Activated T-helper 1 cell treated with anti-CD3 and anti-CD28 coated beads, Interleukin-12 subunit alpha, Interleukin-12 subunit beta, Interleukin-2, Interleukin-4 antibody, amounts not matched to agents 30 ng/mL and 10 ng/mL and 1 ng/mL, durations not matched to agents 14 hours and 24 hours and 36 hours (primary cell): ENCODE measurements at regions of chr19 and their contacts with region 1.

Region 1: DNA sequence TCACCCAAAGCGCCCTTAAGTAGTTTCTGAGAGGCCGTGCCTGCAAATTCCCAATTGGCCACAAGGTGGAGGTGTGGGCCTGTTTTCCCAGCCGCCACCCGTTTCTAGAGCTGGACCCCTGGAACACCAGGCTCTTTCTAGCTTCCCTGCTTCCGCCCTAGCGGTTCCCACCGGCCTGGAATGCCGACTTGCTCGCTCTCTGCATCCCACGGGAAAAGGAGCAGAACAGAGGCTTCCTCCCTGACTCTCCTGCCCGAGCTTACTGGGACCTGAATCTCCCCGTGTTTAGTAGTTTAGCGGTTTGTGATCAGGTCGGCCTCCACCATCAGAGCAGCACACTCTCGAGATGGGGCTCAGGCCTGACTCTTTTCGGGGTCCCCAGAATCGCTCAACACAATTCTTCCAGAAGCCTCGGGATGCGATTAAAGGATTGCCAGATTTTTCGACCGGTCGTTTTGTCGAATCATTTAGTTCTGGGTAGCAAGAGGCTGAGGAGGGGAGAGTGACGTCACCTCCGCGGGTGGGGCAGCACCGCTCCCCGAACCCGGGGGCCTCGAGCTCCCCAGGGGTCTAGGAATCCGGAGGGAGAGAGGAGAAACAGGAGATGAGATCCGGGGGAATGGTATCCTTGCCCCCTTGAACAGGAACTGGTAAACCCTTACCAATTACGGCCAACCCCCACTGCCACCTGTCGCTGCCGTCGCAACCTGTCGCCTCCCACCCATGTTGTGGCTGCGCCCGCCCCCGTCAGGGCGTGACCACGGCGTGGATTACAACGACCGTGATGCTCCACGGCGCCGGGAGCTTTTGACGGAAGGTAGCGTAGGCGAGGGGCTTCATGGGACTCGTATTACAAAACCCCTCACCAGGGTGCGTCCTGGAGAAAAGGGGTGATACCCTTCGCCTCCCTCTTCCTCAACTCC is 8.0 kb downstream of the NAPSA start:
- DNase-seq: peak; percentile 86
- H3K4me3 Mint-ChIP-seq: peak overlapping the region; percentile 90
- H3K27ac Mint-ChIP-seq: peak overlapping the region; percentile 99
- H3K4me1 Mint-ChIP-seq: peaks cover 52% of the 10 kb centered on the region
- H3K27me3 Mint-ChIP-seq: no peaks in the 10 kb centered on the region

Region 2: DNA sequence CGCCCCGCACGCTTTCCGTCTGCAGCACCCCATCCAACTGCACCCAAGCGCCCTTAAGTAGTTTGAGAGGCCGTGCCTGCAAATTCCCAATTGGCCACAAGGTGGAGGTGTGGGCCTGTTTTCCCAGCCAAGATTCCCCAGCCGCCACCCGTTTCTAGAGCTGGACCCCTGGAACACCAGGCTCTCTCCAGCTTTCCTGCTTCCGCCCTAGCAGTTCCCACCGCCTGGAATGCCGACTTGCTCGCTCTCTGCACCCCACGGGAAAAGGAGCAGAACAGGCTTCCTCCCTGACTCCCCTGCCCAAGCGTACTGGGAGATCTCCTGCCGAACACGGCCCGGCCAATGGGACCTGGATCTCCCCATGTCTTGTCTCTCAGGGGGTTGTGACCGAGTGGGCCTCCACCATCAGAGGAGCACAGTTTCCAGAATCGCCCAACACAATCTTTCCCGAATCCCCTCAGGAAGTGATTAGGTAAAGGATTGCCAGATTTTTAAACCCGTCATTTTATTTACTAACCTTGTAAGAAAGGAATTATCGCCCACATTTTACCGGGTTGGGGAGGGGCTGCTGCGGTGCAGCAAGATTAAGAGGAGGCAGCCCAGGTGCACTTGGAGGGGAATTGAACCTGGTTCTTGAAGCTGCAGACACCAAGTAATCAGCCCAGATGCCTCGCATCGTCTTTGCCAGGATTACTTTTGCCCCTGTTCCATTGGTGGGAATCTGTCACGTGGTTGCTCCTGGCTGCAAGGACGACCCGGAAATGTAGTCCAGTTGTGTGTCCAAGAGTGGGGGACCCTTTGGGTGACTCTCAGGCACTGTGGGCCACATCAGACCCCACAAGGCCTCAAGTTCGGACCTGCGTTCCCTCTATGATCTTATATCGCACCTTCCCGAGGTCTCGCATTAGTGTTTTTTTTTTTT is 11.5 kb after region 1 on chr19:
- intact Hi-C with region 1: loop called (anchors 1 kb)
- DNase-seq: peak; percentile 73
- H3K4me3 Mint-ChIP-seq: peak overlapping the region; percentile 94
- H3K27ac Mint-ChIP-seq: peak overlapping the region; percentile 89
- H3K4me1 Mint-ChIP-seq: peaks cover 37% of the 10 kb centered on the region
- H3K27me3 Mint-ChIP-seq: no peaks in the 10 kb centered on the region

Region 3: DNA sequence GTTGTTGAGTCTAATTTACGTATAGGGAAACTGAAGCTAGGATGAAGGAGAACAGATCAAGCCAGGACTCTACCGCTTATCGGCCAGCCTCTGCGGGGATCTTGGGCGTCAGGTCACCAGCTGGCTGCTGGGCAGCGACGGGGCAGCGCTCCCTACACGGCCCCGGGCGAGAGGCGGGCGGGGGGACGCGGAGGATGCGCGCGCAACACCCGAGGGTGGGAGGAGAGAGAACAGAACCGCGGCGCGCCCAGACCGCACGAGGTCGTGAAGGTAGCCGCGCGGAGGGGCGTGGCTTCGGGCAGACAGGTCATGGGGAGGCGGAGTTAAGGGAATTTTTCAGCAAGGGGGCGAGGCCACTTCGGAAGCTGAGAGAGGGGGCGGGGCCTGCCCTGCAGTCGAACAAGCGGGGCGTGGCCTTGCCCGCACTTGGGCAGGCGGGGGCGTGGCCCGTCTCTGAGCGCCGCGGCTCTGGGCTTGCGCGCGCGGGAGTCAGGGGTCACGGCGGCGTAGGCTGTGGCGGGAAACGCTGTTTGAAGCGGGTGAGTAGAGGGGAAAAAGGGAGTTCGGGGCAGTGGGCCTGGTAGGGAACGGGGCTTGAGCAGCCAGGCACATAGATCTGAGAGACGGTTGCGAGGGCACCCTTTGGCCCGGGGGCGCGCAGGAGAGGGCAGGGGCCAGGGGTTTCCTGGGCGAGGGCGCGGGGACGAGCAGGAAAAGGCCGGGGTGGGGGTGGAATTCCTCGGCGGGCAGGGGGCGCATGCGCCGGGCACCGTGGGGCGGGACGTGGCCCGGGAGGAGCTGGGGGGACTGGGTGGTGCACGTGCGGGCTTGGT is 26.6 kb after region 1 on chr19 and contains the start of gene POLD1:
- intact Hi-C with region 1: loop called (anchors 1 kb)
- DNase-seq: peak; percentile 99
- H3K4me3 Mint-ChIP-seq: peak within 1 kb of the TSS; percentile 91
- H3K27ac Mint-ChIP-seq: peak within 1 kb of the TSS; percentile 96
- H3K4me1 Mint-ChIP-seq: peaks cover 28% of the 10 kb centered on the region
- H3K27me3 Mint-ChIP-seq: no peaks in the 10 kb centered on the region
- total RNA-seq, gene POLD1: 171 and 178 TPM in 2 replicates

Region 4: DNA sequence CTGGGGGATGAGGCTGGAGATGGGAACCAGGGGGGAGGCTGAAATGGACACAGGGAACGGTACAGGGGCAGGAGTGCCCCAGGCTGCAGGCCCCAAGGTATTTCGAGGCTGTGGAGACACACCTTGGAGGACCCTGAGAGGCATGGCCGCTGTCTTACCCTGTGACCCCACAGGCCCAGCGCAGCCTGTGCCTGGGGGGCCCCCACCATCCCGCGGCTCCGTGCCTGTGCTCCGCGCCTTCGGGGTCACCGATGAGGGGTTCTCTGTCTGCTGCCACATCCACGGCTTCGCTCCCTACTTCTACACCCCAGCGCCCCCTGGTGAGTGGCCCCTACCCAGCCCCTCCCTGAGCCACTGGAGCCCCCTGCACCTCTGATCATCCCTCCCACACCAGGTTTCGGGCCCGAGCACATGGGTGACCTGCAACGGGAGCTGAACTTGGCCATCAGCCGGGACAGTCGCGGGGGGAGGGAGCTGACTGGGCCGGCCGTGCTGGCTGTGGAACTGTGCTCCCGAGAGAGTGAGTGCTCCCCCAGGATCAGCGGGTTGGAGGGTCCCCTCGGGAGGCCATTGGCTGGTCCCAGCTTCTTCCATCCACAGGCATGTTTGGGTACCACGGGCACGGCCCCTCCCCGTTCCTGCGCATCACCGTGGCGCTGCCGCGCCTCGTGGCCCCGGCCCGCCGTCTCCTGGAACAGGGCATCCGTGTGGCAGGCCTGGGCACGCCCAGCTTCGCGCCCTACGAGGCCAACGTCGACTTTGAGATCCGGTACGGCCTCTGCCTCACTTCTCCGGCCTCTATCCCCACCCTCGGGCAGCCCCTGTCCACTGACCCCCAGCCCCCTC is 44.4 kb after region 1 on chr19:
- intact Hi-C with region 1: no loop called
- DNase-seq: no peak
- H3K4me3 Mint-ChIP-seq: no peak overlapping the region
- H3K27ac Mint-ChIP-seq: no peak overlapping the region
- H3K4me1 Mint-ChIP-seq: no peaks in the 10 kb centered on the region
- H3K27me3 Mint-ChIP-seq: no peaks in the 10 kb centered on the region

Region 5: DNA sequence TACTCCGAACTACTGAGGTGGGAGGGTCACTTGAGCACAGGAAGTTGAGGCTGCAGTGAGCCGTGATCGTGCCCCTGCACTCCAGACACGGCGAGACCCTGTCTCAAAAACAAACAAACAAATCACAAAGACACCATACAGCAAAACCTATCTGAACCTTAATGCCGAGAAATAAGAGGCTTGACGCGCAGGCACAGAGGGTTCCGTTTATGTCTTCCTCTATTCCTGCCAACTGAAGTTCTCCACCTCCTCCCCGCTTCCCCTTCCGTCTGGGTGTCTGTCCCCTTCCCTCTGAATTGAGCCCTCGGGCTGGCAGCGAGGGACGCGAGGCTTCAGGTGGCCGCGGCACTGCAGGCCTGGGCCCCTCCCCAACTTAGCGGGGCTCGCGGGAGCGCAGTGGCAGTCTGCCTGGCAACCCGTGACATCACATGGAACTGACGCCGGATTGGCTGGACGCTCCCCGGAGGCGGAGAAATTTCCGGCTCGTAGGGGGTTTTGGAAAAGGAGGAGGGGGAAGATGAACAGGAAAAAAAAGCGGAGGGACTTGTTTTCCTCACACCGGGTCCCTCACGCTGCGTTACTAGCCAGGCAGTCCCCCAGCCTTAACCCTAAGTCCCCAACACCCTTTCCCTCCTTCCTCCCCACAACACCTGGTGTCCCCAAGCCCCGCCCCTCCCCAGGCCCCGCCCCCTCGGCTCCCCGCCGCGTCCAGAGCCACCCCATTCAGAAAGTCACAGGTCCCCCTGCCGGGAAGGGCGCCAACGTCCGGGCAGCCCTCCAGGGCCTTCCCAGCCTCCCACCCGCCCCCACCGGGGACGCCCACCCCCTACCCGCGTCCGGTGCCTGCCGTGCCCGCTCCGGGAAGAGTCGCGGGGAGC is 74.1 kb after region 1 on chr19:
- intact Hi-C with region 1: loop called (anchors 1 kb)
- DNase-seq: peak; percentile 88
- H3K4me3 Mint-ChIP-seq: peak overlapping the region; percentile 89
- H3K27ac Mint-ChIP-seq: peak overlapping the region; percentile 93
- H3K4me1 Mint-ChIP-seq: peaks cover 12% of the 10 kb centered on the region
- H3K27me3 Mint-ChIP-seq: peaks cover 13% of the 10 kb centered on the region

Region 6: DNA sequence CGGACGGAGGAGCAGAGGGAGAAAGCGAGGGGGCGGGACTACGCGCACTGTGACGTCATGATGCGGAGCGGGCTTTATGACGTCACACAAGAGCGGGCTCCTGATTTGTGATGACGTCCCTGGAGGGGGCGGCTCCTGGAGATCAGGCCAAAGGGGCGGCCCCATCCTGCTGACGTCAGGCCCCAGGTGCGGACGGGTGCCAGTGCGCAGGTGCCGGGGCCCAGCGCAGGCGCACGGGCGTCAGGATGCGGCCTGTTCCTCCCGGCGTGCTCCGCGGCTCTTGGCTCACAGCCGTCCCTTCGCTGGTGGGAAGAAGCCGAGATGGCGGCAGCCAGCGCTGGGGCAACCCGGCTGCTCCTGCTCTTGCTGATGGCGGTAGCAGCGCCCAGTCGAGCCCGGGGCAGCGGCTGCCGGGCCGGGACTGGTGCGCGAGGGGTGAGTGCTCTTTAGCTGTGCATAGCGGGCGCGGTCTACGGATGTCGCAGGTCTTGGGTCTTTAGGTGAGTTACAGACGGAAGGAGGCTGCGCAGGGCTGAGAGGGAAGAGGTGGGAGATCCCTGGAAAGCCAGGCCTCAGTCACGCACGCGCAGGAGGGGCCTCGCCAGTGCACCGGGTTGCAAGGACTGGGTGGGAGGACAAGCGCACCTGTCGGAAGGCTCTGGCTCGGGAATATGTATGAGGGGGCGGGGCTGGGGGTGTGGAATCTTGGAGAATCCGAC is 118.9 kb after region 1 on chr19 and contains the starts of genes EMC10 and GARIN5A:
- intact Hi-C with region 1: loop called (anchors 5 kb)
- DNase-seq: peak; percentile 92
- H3K4me3 Mint-ChIP-seq: peak within 1 kb of the TSS; percentile 91
- H3K27ac Mint-ChIP-seq: peak within 1 kb of the TSS; percentile 72
- H3K4me1 Mint-ChIP-seq: peaks cover 20% of the 10 kb centered on the region
- H3K27me3 Mint-ChIP-seq: no peaks in the 10 kb centered on the region
- total RNA-seq, gene EMC10: 90.0 and 95.4 TPM in 2 replicates
- total RNA-seq, gene GARIN5A: 0.39 and 0.88 TPM in 2 replicates

Region 7: GRCh38 chr19:50556282-50557008 is 199.0 kb after region 1 on chr19:
- intact Hi-C with region 1: loop called (anchors 1 kb)
- DNase-seq: peak; percentile 72
- H3K4me3 Mint-ChIP-seq: peak overlapping the region; percentile 94
- H3K27ac Mint-ChIP-seq: peak overlapping the region; percentile 72
- H3K4me1 Mint-ChIP-seq: peaks cover 5% of the 10 kb centered on the region
- H3K27me3 Mint-ChIP-seq: peaks cover 36% of the 10 kb centered on the region

Region 8: GRCh38 chr19:50922317-50922853 is 564.9 kb after region 1 on chr19:
- intact Hi-C with region 1: loop called (anchors 1 kb)
- DNase-seq: peak; percentile 65
- H3K4me3 Mint-ChIP-seq: no peak overlapping the region
- H3K27ac Mint-ChIP-seq: no peak overlapping the region
- H3K4me1 Mint-ChIP-seq: peaks cover 9% of the 10 kb centered on the region
- H3K27me3 Mint-ChIP-seq: peaks cover 14% of the 10 kb centered on the region